ENCODE measurements at regions of chr7 and their contacts with region 1.

Region 1: GRCh38 chr7:37181550-37181932 is 267.1 kb downstream of the ELMO1 start:
- DNase-seq: no peak
- H3K4me3 Mint-ChIP-seq: no peak overlapping the region
- H3K27ac Mint-ChIP-seq: no peak overlapping the region
- H3K4me1 Mint-ChIP-seq: no peaks in the 10 kb centered on the region
- H3K27me3 Mint-ChIP-seq: peaks cover 10% of the 10 kb centered on the region
- CTCF ChIP-seq: no peak

Region 2: DNA sequence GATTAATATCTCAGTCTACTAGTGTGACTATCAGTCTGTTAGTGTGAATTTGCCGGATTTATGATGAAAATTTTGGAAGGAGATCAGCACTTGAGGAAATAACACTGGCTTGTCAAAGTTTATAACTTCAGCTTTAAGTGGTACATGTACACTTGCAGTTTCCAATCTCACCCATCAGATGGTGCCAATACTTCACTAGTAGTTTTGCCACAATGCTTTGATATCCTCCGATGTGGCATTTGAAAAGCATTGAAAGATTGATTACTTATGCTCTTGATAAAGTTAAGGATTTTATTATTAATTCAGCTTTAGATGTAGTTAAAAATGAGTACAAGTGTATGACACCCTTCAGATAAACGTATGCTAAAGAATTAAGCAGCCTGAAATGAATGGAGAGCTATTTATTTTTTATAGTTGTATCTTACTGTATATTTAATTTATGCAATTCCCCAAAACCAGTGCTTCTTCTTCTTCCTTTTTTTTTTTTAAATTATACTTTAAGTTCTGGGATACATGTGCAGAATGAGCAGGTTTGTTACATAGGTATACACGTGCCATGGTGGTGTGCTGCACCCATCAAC is 693.7 kb before region 1 on chr7:
- CTCF ChIA-PET with region 1: interaction called, 157 read pairs
- POLR2A ChIA-PET with region 1: interaction called, 4 read pairs
- intact Hi-C with region 1: loop called (anchors 1 kb)
- DNase-seq: peak; percentile 74
- H3K4me3 Mint-ChIP-seq: no peak overlapping the region
- H3K27ac Mint-ChIP-seq: no peak overlapping the region
- H3K4me1 Mint-ChIP-seq: peaks cover 16% of the 10 kb centered on the region
- H3K27me3 Mint-ChIP-seq: no peaks in the 10 kb centered on the region
- CTCF ChIP-seq: peak; percentile 93

Region 3: DNA sequence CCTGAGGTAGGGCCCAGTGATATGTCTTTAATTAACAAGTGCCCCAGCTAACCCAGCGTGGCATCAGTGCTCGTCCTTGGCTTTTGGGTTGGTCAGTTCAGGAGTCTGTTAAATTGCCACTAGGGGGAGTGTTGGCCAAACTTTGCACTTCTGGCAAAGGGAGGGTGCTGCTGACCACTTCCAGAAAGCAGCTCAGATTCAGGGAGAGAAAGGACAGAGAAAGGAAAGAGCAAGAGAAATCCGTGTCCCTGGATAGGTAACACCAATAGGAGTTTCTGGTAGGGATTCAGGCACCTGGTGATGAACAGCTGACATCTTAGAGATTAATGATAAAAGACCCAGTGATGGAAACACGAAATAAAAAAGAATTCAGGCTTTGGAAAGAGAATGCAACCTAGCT is 214.2 kb before region 1 on chr7:
- CTCF ChIA-PET with region 1: interaction called, 21 read pairs
- POLR2A ChIA-PET with region 1: interaction called, 4 read pairs
- intact Hi-C with region 1: loop called (anchors 1 kb)
- DNase-seq: peak; percentile 73
- H3K4me3 Mint-ChIP-seq: no peak overlapping the region
- H3K27ac Mint-ChIP-seq: no peak overlapping the region
- H3K4me1 Mint-ChIP-seq: no peaks in the 10 kb centered on the region
- H3K27me3 Mint-ChIP-seq: no peaks in the 10 kb centered on the region
- CTCF ChIP-seq: peak; percentile 71

Region 4: DNA sequence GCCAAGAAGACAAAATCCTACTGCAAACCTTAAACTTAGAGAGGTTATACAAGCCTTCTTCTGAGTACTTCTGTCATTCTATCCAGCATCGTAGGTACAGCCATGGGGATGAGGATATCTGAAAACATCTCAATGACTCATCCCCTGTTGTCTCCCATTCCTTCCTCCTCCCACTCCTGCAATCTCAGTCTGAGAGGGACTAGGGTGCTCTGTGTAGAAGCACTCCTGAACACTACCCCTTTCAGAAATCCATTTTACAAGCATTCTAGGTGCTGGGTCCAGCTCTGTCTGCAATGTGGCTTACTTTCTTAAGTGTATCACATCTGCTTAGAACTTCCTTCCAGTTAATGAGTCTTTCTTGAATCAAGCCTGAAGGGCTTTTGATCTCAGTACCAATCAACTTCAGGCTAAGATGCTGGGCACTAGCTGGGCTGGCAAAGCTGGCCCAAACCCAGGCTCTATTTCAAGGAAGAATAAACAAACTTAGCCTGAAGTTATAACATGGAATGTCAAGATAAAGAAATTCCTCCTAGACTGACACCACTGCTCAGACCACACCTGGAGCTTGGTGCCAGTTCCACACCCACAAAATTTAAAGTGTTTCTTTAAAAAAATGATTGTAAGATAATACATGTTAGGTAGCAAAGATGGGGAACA is 187.0 kb before region 1 on chr7:
- CTCF ChIA-PET with region 1: interaction called, 101 read pairs
- POLR2A ChIA-PET with region 1: no interaction called
- intact Hi-C with region 1: no loop called
- DNase-seq: peak; percentile 18
- H3K4me3 Mint-ChIP-seq: no peak overlapping the region
- H3K27ac Mint-ChIP-seq: no peak overlapping the region
- H3K4me1 Mint-ChIP-seq: peaks cover 9% of the 10 kb centered on the region
- H3K27me3 Mint-ChIP-seq: peaks cover 15% of the 10 kb centered on the region
- CTCF ChIP-seq: no peak

Region 5: DNA sequence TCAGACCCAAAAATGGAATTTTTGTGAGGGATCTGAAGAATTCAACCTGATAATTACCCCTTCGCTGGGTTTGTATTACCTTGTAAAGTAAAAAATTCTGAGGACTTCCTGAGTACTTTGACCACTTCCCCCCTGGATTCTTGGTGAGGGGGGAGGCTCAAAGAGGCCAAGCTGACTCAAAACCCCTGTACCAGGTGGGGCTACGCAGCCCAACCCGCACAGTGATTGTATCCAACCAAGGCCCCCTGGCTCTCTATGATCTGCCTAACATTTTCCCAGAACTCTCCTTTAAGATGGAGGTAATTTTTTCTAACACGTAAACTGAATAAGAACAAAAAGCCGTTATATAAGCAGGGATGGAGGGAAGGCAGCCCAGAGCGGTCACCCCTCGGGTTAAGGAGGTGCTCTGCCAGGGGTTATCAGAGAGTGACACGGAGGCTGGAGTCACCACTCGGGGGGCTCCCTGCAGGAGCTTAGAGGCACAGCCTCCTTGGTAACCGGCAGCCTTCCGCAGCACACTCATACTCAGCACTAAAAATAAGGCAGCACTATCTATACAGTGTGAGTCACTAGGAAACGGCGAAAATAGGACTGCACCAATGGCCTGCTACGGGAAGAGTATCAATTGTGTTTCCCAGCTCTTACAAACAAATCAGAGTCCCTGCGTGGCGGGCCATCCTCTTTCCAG is 11.7 kb after region 1 on chr7:
- CTCF ChIA-PET with region 1: interaction called, 21 read pairs
- POLR2A ChIA-PET with region 1: interaction called, 3 read pairs
- intact Hi-C with region 1: no loop called
- DNase-seq: no peak
- H3K4me3 Mint-ChIP-seq: no peak overlapping the region
- H3K27ac Mint-ChIP-seq: no peak overlapping the region
- H3K4me1 Mint-ChIP-seq: no peaks in the 10 kb centered on the region
- H3K27me3 Mint-ChIP-seq: no peaks in the 10 kb centered on the region
- CTCF ChIP-seq: no peak

Region 6: DNA sequence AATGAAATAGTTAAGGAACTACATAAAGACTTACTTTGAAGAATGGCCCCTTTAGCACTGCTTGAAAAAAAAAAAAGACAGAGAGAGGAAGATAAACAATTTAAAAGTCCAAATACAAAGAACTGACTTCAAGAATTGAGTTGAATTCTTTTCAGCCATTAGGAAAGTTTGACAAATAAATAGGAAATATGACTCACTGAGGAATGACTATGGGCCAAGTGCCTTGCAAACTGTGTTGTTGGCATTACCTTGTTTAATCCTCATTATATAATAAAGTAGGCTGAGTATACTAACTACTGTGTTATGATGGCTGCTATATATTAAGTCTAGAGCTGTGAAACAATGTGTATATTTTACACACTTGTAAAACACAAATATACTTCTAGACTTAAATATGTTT is 116.0 kb after region 1 on chr7:
- CTCF ChIA-PET with region 1: no interaction called
- POLR2A ChIA-PET with region 1: no interaction called
- intact Hi-C with region 1: no loop called
- DNase-seq: peak; percentile 32
- H3K4me3 Mint-ChIP-seq: no peak overlapping the region
- H3K27ac Mint-ChIP-seq: no peak overlapping the region
- H3K4me1 Mint-ChIP-seq: no peaks in the 10 kb centered on the region
- H3K27me3 Mint-ChIP-seq: no peaks in the 10 kb centered on the region
- CTCF ChIP-seq: no peak